IMR-90 (cell line): ENCODE measurements at regions of chr21 and their contacts with region 1.

Region 1: DNA sequence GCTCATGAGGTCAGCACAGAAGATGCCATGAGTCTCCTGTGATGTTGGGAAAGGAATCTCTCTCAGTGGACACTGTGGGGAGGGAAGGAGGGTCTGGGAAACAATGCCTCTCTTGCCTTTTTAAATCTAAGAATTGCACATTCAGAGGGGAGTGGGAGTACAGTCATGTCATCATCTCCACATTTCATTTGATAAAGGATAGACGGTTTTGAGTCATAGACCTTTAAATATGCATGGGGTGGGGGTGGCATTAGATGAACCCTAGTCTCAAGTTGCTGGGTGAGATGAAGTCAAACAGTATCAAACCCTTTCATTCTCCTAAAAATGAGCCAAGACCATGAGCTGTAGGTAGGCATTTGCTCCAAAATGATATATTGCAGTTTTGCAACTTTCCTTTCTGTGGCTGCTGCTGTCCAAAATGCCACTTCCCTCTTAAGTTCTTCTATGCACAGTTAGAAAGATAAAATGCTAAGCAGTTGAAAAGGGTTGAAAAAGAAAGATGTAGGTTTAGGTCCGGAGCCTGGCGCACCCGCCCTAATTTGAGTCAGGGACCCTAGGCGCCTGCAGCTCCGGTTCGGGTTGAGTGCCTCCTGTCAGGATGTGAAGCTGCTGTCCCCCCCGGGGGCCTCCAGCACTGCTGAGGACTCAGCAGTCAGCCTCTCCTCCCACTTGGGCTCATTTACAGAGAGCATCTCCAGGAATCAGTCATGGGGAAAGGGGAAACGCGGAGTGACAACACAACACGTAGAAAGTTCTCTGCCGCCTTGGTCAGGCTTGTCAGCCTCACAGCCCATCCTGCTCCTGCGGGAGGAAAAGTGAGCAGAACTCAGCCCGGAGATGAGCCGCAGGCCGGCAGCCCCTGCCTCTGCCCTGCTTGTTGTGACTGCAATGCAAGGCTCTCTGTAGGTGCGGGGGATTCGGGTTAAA is 479.3 kb upstream of the RUNX1 start:
- DNase-seq: peak; percentile 20
- ATAC-seq: peak; percentile 59
- H3K4me3 ChIP-seq: peak overlapping the region; percentile 33
- H3K27ac ChIP-seq: peak overlapping the region; percentile 79
- H3K4me1 ChIP-seq: peaks cover 9% of the 10 kb centered on the region
- H3K27me3 ChIP-seq: no peaks in the 10 kb centered on the region
- CTCF ChIP-seq: no peak
- POLR2A ChIP-seq: no peak
- RAD21 ChIP-seq: no peak

Region 2: GRCh38 chr21:34905218-34905537 is 623.2 kb before region 1 on chr21:
- CTCF ChIA-PET with region 1: no interaction called
- POLR2A ChIA-PET with region 1: interaction called, 10 read pairs
- dilution Hi-C with region 1: no loop called
- in situ Hi-C with region 1: no loop called
- intact Hi-C with region 1: no loop called
- DNase-seq: no peak
- ATAC-seq: no peak
- H3K4me3 ChIP-seq: no peak overlapping the region
- H3K27ac ChIP-seq: no peak overlapping the region
- H3K4me1 ChIP-seq: peaks cover 5% of the 10 kb centered on the region; the same call in 1 of the 2 replicates
- H3K27me3 ChIP-seq: no peaks in the 10 kb centered on the region
- CTCF ChIP-seq: no peak
- POLR2A ChIP-seq: no peak
- RAD21 ChIP-seq: no peak

Region 3: DNA sequence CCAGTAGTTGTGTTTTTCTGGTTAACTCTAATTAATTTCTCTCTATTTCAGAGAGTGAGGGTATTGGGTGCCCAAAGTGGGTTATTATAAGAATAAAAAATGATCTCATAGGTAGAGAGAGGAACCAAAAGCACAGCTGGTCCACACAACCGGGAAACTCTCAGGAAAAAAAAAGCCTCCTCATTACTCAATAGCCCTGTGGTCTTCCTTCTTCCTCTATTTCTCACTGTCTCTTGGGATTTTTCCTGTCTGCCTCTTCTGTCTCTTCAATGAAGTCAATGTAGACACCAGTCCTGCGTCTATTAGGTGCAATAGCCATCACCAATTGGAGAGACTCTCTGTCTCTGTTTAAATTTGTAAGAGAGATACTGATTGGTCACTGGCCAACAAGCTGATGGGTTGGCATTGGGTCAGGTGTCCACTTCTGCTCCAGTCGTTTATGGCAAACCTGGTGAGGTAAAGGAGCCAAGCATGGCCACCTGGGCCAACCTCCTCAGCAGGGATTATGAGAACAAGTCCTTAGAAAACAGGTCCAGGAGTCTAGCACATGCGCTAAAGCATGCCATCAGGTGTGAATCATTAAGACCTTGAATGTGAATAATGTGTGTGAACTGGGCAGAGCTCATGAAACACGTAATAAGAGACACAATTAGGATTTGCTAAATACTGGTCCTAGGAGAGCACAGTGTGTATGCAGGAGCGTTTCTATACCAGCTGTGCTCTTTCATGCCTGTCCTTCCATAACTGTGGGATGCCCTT is 36.3 kb before region 1 on chr21:
- CTCF ChIA-PET with region 1: no interaction called
- POLR2A ChIA-PET with region 1: no interaction called
- dilution Hi-C with region 1: no loop called
- in situ Hi-C with region 1: no loop called
- intact Hi-C with region 1: no loop called
- DNase-seq: no peak
- ATAC-seq: no peak
- H3K4me3 ChIP-seq: no peak overlapping the region
- H3K27ac ChIP-seq: no peak overlapping the region
- H3K4me1 ChIP-seq: no peaks in the 10 kb centered on the region
- H3K27me3 ChIP-seq: no peaks in the 10 kb centered on the region
- CTCF ChIP-seq: no peak
- POLR2A ChIP-seq: no peak
- RAD21 ChIP-seq: no peak

Region 4: GRCh38 chr21:35575280-35575915 is 47.0 kb after region 1 on chr21:
- CTCF ChIA-PET with region 1: no interaction called
- POLR2A ChIA-PET with region 1: no interaction called
- dilution Hi-C with region 1: no loop called
- in situ Hi-C with region 1: no loop called
- intact Hi-C with region 1: no loop called
- DNase-seq: peak; percentile 96
- ATAC-seq: peak; percentile 81
- H3K4me3 ChIP-seq: no peak overlapping the region
- H3K27ac ChIP-seq: peak overlapping the region; percentile 16; the same call in 1 of the 2 replicates
- H3K4me1 ChIP-seq: peaks cover 26% of the 10 kb centered on the region
- H3K27me3 ChIP-seq: no peaks in the 10 kb centered on the region
- CTCF ChIP-seq: no peak
- POLR2A ChIP-seq: no peak
- RAD21 ChIP-seq: peak; percentile 19; the same call in 1 of the 2 replicates